B cell (primary cell): ENCODE measurements at regions of chr15 and their contacts with region 1.

Region 1: GRCh38 chr15:84588053-84588874 is 12.5 kb upstream of the ZSCAN2 start:
- DNase-seq: peak; percentile 90
- ATAC-seq: peak; percentile 100
- H3K4me3 ChIP-seq: peak overlapping the region in 4 of 5 experiments; percentile 20 to 47 (median 27)
- H3K4me3 Mint-ChIP-seq: peak overlapping the region; percentile 79
- H3K27ac ChIP-seq: no peak overlapping the region
- H3K27ac Mint-ChIP-seq: peak overlapping the region; percentile 41
- H3K4me1 ChIP-seq: peaks cover 5 to 6% of the 10 kb centered on the region in 2 donors
- H3K4me1 Mint-ChIP-seq: peaks cover 4% of the 10 kb centered on the region
- H3K27me3 ChIP-seq: peaks cover 0 to 8% (median 0%) of the 10 kb centered on the region in 4 experiments
- H3K27me3 Mint-ChIP-seq: peaks cover 14% of the 10 kb centered on the region
- CTCF ChIP-seq: peak; percentile 87

Region 2: DNA sequence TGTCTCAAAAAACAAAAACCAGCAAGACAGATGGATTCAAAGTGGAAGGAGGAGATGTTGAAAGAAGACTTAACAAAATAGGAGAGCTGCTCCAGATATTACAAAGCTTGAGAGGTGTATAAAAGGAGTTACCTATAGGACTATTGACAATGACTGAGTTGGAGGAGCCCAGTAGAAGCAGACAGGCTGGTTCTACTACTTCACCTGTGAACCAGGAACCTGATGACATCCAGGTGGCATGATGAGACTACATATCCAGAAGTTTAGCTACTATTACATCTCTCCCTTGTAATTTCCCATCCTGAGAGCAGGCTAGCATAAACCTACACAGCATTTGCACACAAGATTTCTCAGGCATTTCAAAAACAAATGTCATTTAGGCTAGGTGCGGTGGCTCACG is 1990.4 kb before region 1 on chr15:
- CTCF ChIA-PET with region 1: no interaction called
- POLR2A ChIA-PET with region 1: no interaction called
- intact Hi-C with region 1: no loop called
- DNase-seq: no peak
- ATAC-seq: no peak
- H3K4me3 ChIP-seq: no peak overlapping the region
- H3K4me3 Mint-ChIP-seq: no peak overlapping the region
- H3K27ac ChIP-seq: no peak overlapping the region
- H3K27ac Mint-ChIP-seq: no peak overlapping the region
- H3K4me1 ChIP-seq: no peaks in the 10 kb centered on the region
- H3K4me1 Mint-ChIP-seq: no peaks in the 10 kb centered on the region
- H3K27me3 ChIP-seq: peaks cover 0 to 12% (median 6%) of the 10 kb centered on the region in 4 experiments
- H3K27me3 Mint-ChIP-seq: peaks cover 60% of the 10 kb centered on the region
- CTCF ChIP-seq: no peak

Region 3: DNA sequence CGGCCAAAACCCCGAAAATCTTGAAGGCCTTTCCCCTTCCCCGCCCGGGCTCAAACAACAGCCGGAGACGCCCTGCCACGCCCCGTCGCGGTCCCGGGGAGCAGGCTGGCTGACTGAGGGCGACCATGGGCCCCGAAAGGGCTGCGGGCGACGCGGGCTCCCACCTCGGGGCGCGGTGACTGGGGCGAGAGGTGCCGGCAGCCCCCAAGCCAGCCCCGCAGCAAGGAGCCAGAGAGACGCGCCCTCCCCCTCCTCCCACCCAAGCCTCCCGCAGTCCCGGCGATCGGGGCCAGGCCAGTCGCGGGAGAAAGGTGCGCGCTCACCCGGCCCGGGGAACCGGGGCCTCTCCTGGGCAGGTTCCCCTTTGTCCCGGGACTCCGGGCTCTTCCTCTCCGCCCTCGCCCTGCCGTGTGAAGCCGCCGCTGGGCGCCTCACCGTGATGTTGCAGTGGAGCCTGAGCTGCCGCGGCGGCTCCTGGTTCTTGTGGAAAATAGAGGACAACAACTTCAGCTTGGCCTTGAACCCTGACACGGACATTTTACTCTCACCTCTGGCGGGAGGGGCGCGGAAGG is 18.0 kb before region 1 on chr15:
- CTCF ChIA-PET with region 1: interaction called, 28 read pairs
- POLR2A ChIA-PET with region 1: no interaction called
- intact Hi-C with region 1: no loop called
- DNase-seq: peak; percentile 66
- ATAC-seq: peak; percentile 43
- H3K4me3 ChIP-seq: peak overlapping the region; percentile 30 to 87 (median 75)
- H3K4me3 Mint-ChIP-seq: peak overlapping the region; percentile 93
- H3K27ac ChIP-seq: peak overlapping the region; percentile 34 to 59
- H3K27ac Mint-ChIP-seq: peak overlapping the region; percentile 90
- H3K4me1 ChIP-seq: peaks cover 0 to 12% of the 10 kb centered on the region in 2 donors
- H3K4me1 Mint-ChIP-seq: peaks cover 4% of the 10 kb centered on the region
- H3K27me3 ChIP-seq: no peaks in the 10 kb centered on the region
- H3K27me3 Mint-ChIP-seq: no peaks in the 10 kb centered on the region
- CTCF ChIP-seq: no peak

Region 4: DNA sequence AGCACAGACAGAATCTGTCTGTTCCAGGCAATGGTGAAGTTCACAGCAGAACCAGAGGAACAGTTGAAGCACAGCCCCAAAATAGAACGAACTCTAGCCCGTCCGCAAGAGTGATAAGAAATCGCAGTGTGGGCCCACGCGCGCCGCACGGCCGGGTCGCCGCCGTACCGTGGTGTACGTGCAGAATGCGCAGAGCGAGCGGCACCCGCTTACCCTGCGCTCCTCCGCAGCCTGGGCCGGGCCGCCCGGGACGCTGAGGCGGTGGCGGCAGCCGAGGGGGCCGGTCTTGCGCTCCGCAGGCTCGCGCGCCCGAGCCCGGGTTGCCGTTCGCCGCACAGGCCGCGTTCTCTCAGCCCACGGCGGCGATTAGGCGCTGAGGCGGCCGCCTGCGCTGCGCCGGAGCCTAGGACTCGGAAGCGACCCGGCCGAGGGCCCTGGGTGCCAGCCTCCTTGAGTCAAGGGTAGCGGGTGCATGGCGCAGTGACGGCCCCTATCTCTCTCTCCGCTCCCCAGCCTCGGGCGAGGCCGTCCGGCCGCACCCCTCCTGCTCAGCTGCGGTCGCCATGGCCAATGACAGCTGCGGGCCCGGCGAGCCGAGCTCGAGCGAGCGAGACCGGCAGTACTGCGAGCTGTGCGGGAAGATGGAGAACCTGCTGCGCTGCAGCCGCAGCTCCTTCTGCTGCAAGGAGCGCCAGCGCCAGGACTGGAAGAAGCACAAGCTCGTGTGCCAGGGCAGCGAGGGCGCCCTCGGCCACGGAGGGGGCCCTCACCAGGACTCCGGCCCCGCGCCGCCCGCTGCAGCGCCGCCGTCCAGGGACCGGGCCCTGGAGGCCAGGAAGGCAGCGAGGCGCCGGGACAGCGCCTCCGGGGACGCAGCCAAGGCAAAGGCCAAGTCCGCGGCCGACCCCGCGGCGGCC is 45.3 kb after region 1 on chr15:
- CTCF ChIA-PET with region 1: interaction called, 17 read pairs
- POLR2A ChIA-PET with region 1: no interaction called
- intact Hi-C with region 1: loop called (anchors 1 kb)
- DNase-seq: peak; percentile 82
- ATAC-seq: peak; percentile 56
- H3K4me3 ChIP-seq: peak overlapping the region; percentile 61 to 71 (median 65)
- H3K4me3 Mint-ChIP-seq: peak overlapping the region; percentile 97
- H3K27ac ChIP-seq: peak overlapping the region; percentile 50 to 71
- H3K27ac Mint-ChIP-seq: peak overlapping the region; percentile 95
- H3K4me1 ChIP-seq: peaks cover 26 to 41% of the 10 kb centered on the region in 2 donors
- H3K4me1 Mint-ChIP-seq: peaks cover 41% of the 10 kb centered on the region
- H3K27me3 ChIP-seq: no peaks in the 10 kb centered on the region
- H3K27me3 Mint-ChIP-seq: no peaks in the 10 kb centered on the region
- CTCF ChIP-seq: no peak

Region 5: GRCh38 chr15:84819291-84819768 is 231.1 kb after region 1 on chr15:
- CTCF ChIA-PET with region 1: interaction called, 10 read pairs
- POLR2A ChIA-PET with region 1: no interaction called
- intact Hi-C with region 1: no loop called
- DNase-seq: no peak
- ATAC-seq: no peak
- H3K4me3 ChIP-seq: no peak overlapping the region
- H3K4me3 Mint-ChIP-seq: no peak overlapping the region
- H3K27ac ChIP-seq: no peak overlapping the region
- H3K27ac Mint-ChIP-seq: no peak overlapping the region
- H3K4me1 ChIP-seq: peaks cover 3 to 4% of the 10 kb centered on the region in 2 donors
- H3K4me1 Mint-ChIP-seq: peaks cover 5% of the 10 kb centered on the region
- H3K27me3 ChIP-seq: peaks cover 0 to 21% (median 10%) of the 10 kb centered on the region in 4 experiments
- H3K27me3 Mint-ChIP-seq: peaks cover 20% of the 10 kb centered on the region
- CTCF ChIP-seq: no peak

Region 6: DNA sequence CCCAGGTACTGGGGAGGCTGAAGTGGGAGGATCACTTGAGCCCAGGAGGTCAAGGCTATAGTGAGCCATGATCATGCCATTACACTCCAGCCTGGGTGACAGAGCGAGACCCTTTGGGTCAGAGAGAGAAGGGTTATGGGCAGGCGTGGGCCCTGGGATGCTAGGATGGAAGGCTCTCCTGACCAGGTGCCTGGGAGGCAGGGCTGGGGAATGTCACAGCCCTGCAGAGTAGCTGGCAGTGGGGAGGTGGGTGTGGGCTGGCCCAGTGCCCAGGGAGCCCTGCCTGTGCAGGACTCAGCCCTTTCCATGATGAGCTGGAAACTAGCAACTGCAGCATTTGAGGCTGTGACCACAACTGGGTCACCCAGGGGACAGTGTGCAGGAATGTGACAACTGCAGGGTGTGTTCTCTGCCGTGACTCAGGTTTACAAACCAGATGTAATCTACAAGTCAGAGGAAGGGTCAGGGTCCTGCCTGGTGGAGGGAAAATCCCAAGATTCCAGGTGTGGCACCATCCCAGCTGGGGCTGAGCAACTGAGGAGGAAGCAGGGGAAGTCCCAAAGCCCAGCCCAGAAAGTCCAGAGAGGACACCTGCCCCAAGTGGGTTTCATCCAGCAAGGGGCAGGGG is 341.6 kb after region 1 on chr15:
- CTCF ChIA-PET with region 1: interaction called, 51 read pairs
- POLR2A ChIA-PET with region 1: no interaction called
- intact Hi-C with region 1: loop called (anchors 1 kb)
- DNase-seq: no peak
- ATAC-seq: no peak
- H3K4me3 ChIP-seq: no peak overlapping the region
- H3K4me3 Mint-ChIP-seq: no peak overlapping the region
- H3K27ac ChIP-seq: no peak overlapping the region
- H3K27ac Mint-ChIP-seq: no peak overlapping the region
- H3K4me1 ChIP-seq: peaks cover 2 to 5% of the 10 kb centered on the region in 2 donors
- H3K4me1 Mint-ChIP-seq: peaks cover 5% of the 10 kb centered on the region
- H3K27me3 ChIP-seq: no peaks in the 10 kb centered on the region
- H3K27me3 Mint-ChIP-seq: no peaks in the 10 kb centered on the region
- CTCF ChIP-seq: no peak

Region 7: GRCh38 chr15:85010386-85011159 is 422.3 kb after region 1 on chr15:
- CTCF ChIA-PET with region 1: interaction called, 5 read pairs
- POLR2A ChIA-PET with region 1: no interaction called
- intact Hi-C with region 1: loop called (anchors 1 kb)
- DNase-seq: peak; percentile 33
- ATAC-seq: peak; percentile 59
- H3K4me3 ChIP-seq: peak overlapping the region in 1 of 5 experiments; percentile 8
- H3K4me3 Mint-ChIP-seq: peak overlapping the region; percentile 3
- H3K27ac ChIP-seq: peak overlapping the region; percentile 44 to 54
- H3K27ac Mint-ChIP-seq: peak overlapping the region; percentile 57
- H3K4me1 ChIP-seq: peaks cover 51 to 58% of the 10 kb centered on the region in 2 donors
- H3K4me1 Mint-ChIP-seq: peaks cover 67% of the 10 kb centered on the region
- H3K27me3 ChIP-seq: no peaks in the 10 kb centered on the region
- H3K27me3 Mint-ChIP-seq: no peaks in the 10 kb centered on the region
- CTCF ChIP-seq: peak; percentile 58